Transverse colon (tissue), 4 donors: ENCODE measurements at regions of chrX and their contacts with region 1.

Region 1: GRCh38 chrX:133482056-133482952 is 67.0 kb upstream of the GPC4 start:
- DNase-seq: peak; percentile 36
- H3K4me3 ChIP-seq: no peak overlapping the region
- H3K27ac ChIP-seq: peak overlapping the region; percentile 9 to 40 (median 26)
- H3K4me1 ChIP-seq: no peaks in the 10 kb centered on the region
- H3K27me3 ChIP-seq: no peaks in the 10 kb centered on the region
- CTCF ChIP-seq: no peak
- EP300 ChIP-seq: no peak
- POLR2A ChIP-seq: no peak

Region 2: DNA sequence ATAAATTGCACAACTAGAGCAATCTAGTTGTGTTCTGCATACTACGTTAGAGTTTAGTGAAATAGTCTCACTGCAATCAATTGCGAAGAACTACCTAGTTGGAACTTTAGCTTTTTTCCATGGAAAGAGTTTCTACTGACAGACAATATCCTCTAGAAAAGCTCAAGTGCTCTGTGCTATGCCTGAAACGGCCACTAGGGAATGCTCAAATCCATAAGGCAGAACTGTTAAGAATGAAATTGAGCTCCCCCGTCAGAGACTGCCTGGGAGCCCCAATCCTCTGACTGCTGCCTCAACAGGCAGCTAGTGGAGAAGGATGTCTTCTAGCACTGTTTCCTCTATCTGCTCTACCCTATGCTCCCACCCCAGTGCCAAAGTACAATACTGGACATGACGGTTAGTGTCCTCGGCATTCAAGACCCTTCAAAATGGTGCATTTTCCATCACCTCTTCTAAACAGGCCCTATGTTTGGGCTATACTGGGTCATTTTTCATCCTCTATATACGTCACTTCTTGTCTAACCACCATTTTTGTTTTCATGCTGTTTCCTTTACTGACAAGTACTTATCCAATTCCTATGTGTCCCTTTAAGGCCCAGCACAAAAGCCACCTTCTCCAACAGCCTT is 1389.8 kb before region 1 on chrX:
- in situ Hi-C with region 1: no loop called
- intact Hi-C with region 1: no loop called
- DNase-seq: peak; percentile 50
- H3K4me3 ChIP-seq: no peak overlapping the region
- H3K27ac ChIP-seq: no peak overlapping the region
- H3K4me1 ChIP-seq: no peaks in the 10 kb centered on the region
- H3K27me3 ChIP-seq: no peaks in the 10 kb centered on the region
- CTCF ChIP-seq: peak; percentile 52 to 72 (median 66)
- EP300 ChIP-seq: no peak
- POLR2A ChIP-seq: no peak

Region 3: DNA sequence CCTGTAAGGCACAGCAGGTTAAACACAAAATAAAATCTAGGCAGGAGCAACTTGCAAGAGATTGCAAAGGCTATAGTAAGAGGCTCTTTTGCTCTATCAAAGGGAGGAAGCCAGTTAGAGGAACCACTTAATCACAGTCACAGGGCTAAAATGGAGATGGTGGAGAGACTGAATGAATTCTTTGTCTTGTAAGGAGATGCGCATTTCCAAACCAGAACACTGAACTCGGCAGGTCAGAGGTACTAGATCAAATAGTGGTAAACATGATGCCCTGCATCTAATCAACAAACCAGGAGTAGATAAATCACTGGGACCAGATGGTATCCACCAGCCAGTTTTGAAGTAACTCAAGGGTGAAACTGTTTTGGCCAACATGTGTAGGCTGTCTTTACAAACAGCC is 122.8 kb before region 1 on chrX:
- in situ Hi-C with region 1: no loop called
- intact Hi-C with region 1: no loop called
- DNase-seq: no peak
- H3K4me3 ChIP-seq: no peak overlapping the region
- H3K27ac ChIP-seq: no peak overlapping the region
- H3K4me1 ChIP-seq: no peaks in the 10 kb centered on the region
- H3K27me3 ChIP-seq: no peaks in the 10 kb centered on the region
- CTCF ChIP-seq: no peak
- EP300 ChIP-seq: no peak
- POLR2A ChIP-seq: no peak

Region 4: DNA sequence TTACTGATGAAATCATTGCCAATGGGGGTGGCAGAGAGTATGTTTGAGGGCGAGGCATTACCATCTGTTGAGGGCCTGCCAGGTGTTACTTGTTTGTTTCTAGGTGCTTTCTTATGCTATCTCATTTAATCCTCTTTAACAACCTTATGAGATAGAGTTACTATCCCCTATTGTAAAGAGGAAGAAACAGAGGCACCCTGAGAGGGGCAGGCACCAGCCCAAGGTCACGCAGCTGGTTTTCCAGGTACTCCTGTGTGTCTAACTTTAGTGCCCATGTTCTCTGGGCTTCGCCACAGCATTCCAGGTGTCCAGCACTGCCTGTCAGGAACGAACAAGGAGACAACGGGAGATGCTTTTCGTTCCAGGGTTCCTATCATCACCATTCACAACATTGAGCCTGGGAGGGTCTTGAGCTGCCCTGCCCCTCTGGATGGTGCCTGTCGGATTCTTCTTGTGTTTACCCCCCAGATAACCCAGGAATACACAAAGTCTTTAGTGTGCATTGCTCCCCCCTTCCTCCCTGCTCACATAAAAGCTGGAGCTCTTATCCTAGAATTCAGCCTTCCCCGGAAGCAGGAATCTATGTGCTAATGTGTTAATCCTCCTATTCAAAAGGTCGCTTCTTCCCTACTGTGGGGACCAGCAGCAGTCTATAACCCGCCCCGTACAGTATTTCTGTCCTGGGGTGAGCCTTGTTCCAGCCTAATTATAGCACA is 42.1 kb before region 1 on chrX:
- in situ Hi-C with region 1: no loop called
- intact Hi-C with region 1: loop called (anchors 2 kb)
- DNase-seq: no peak
- H3K4me3 ChIP-seq: no peak overlapping the region
- H3K27ac ChIP-seq: no peak overlapping the region
- H3K4me1 ChIP-seq: no peaks in the 10 kb centered on the region
- H3K27me3 ChIP-seq: no peaks in the 10 kb centered on the region
- CTCF ChIP-seq: no peak
- EP300 ChIP-seq: no peak
- POLR2A ChIP-seq: no peak

Region 5: GRCh38 chrX:133590703-133591505 is 108.6 kb after region 1 on chrX:
- in situ Hi-C with region 1: no loop called
- intact Hi-C with region 1: no loop called
- DNase-seq: no peak
- H3K4me3 ChIP-seq: no peak overlapping the region
- H3K27ac ChIP-seq: no peak overlapping the region
- H3K4me1 ChIP-seq: no peaks in the 10 kb centered on the region
- H3K27me3 ChIP-seq: no peaks in the 10 kb centered on the region
- CTCF ChIP-seq: no peak
- EP300 ChIP-seq: no peak
- POLR2A ChIP-seq: no peak